Activated naive CD4-positive, alpha-beta T cell treated with anti-CD3 and anti-CD28 coated beads for 36 hours (primary cell): ENCODE measurements at regions of chrX and their contacts with region 1.

Region 1: DNA sequence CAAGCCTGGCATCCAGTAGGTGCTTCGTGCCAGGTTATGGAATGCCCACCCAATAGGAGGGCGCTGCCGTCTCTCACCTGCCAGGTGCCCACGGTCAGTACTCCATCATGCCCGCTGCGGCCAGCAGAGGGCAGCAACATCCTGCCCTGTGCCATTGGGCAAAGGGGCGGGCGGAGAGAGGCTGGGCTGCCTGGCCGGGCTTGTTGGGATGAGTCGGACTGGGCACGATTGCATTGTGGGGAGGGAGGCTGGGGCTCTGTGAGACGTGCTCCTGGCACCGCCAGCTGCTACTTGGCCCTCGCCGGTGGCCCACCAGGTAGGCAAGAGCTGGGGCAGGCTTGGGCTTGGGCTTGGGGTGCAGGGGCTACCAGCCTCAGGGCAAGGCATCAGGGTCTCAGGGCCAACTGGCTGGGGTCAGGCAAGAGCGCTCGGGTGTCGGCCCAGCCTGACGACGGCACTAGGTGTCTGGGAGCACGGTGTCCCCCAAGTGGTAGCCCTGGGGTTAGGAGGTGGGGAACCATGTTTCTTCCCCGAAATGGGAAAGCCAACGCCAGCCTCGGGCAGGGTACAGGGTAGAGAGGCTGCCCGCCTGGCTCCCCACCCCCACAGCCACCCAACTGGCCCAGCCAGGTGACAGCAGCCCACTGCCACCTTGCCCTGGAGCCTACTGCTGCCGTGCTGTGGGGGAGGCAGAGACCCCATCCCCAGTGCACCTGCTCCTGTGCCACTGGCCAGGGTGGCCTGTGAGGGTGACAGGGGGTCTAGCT is at the start of gene PLXNB3:
- DNase-seq: peak; percentile 82
- H3K4me3 Mint-ChIP-seq: no peak within 1 kb of the TSS
- H3K27ac Mint-ChIP-seq: no peak within 1 kb of the TSS
- H3K4me1 Mint-ChIP-seq: peaks cover 6% of the 10 kb centered on the region
- H3K27me3 Mint-ChIP-seq: no peaks in the 10 kb centered on the region
- total RNA-seq, gene PLXNB3: 0.05 to 0.44 TPM

Region 2: GRCh38 chrX:153885968-153886903 is 122.1 kb after region 1 on chrX and contains the start of gene L1CAM:
- CTCF ChIA-PET with region 1: no interaction called
- intact Hi-C with region 1: loop called (anchors 1 kb)
- DNase-seq: peak; percentile 38
- H3K4me3 Mint-ChIP-seq: peak within 1 kb of the TSS; percentile 53
- H3K27ac Mint-ChIP-seq: no peak within 1 kb of the TSS
- H3K4me1 Mint-ChIP-seq: peaks cover 3% of the 10 kb centered on the region
- H3K27me3 Mint-ChIP-seq: peaks cover 8% of the 10 kb centered on the region
- total RNA-seq, gene L1CAM: 0.40 to 0.57 TPM

Region 3: DNA sequence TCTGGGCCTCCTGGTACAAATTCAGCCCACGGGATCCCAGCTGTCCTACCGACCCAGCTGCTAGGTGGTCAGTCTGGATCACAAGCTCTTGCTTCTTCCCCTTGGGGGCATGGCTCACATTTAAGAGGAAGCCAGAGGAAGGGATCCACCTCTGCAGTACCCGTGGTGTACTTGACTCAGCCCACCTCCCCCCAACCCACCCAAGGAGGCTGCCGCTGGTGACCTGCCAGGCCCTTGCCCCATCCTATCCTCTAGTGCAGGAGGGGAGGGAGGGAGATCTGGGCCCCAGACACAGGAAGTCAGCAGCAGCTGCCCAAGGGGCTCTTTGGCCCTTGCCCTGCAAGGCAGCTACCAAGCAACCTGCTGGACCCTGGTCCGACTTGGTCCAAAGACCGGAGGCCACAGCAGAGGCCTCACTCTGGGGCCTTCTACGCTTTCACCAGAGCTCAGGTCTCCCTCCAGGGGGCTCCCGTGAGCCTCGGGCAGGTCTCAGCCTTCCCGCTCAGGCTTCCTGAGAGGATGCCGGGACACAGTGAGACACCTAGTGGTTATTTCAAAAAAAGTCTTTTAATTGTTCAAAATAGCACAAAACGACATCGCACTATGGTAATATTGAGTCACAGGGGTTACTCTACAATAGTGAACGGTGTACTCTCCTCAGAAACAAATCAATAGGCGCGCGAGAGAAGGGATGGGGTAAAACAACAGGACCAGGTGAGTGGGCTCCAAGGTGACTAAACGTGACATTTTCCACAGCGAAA is 183.0 kb after region 1 on chrX:
- CTCF ChIA-PET with region 1: interaction called, 36 read pairs
- intact Hi-C with region 1: loop called (anchors 1 kb)
- DNase-seq: peak; percentile 87
- H3K4me3 Mint-ChIP-seq: no peak overlapping the region
- H3K27ac Mint-ChIP-seq: peak overlapping the region; percentile 76
- H3K4me1 Mint-ChIP-seq: peaks cover 28% of the 10 kb centered on the region
- H3K27me3 Mint-ChIP-seq: no peaks in the 10 kb centered on the region

Region 4: DNA sequence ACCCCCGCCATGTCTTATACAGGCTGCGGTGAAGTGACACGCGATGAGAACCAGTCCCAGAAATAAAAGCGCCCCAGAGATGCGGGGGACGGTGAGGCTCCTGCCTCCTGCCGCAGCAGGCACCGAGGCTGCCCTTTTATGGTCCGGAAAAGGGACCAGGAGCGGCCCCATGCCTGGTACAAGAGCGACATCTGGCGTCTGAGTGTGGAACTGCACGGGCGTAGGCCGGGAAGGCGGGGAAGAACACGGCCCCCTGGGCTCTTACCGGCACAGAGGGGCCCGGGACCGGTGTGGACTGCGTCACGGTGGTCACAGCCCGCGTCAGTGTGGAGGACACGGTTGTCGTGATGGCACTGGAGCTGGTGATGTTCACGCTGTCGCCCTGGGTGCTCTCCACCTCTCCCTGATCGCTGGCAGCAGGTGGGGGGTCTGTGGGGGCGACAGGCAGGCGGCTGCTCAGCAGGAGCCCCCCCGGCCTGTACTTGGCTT is 189.2 kb after region 1 on chrX:
- CTCF ChIA-PET with region 1: interaction called, 36 read pairs
- intact Hi-C with region 1: loop called (anchors 1 kb)
- DNase-seq: peak; percentile 82
- H3K4me3 Mint-ChIP-seq: no peak overlapping the region
- H3K27ac Mint-ChIP-seq: peak overlapping the region; percentile 63
- H3K4me1 Mint-ChIP-seq: peaks cover 26% of the 10 kb centered on the region
- H3K27me3 Mint-ChIP-seq: no peaks in the 10 kb centered on the region